ENCODE measurements at regions of chr14 and their contacts with region 1.

Region 1: DNA sequence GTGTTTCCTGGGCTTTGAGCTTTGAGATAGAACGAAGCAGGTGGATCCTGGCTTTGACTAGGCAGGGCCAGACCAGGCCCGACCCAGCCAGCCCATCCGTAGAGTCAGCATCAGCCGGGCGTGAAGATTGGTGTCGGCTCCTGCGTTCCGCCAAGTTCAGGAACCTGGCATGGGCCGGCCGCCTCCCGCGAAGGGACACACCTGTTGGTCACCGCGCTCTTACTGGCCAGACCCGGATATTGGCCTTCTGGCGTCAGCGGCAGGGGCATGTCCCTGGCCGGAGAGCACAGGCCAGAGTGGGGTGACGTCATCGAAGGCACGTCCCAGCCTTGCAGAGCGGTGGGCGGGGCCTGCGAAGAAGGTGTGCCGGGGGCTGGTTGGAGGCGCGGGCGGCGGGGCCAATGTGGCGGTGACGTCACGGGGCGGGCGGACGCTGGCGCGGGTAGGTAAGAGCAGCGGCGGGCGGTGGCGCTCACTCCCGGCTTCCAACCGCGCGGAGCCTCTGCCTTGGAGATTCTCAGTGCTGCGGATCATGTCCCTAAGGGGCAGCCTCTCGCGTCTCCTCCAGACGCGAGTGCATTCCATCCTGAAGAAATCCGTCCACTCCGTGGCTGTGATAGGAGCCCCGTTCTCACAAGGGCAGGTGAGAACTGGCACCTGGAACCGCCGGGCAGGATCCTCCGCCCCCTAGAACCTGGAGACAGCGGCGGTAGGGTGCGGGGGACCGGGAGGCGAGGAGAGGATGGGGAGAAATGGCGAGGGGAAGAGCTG is at the start of gene ARG2:
- DNase-seq: no peak
- ATAC-seq: peak; percentile 96
- H3K4me3 ChIP-seq: peak within 1 kb of the TSS; percentile 58 to 71
- H3K27ac ChIP-seq: no peak within 1 kb of the TSS
- H3K4me1 ChIP-seq: peaks cover 9% of the 10 kb centered on the region
- H3K27me3 ChIP-seq: no peaks in the 10 kb centered on the region
- CTCF ChIP-seq: no peak
- total RNA-seq, gene ARG2: 1.1 TPM

Region 2: GRCh38 chr14:67446120-67447032 is 173.3 kb before region 1 on chr14:
- CTCF ChIA-PET with region 1: no interaction called
- POLR2A ChIA-PET with region 1: no interaction called
- in situ Hi-C with region 1: no loop called
- intact Hi-C with region 1: no loop called
- DNase-seq: no peak
- ATAC-seq: no peak
- H3K4me3 ChIP-seq: no peak overlapping the region
- H3K27ac ChIP-seq: no peak overlapping the region
- H3K4me1 ChIP-seq: no peaks in the 10 kb centered on the region
- H3K27me3 ChIP-seq: no peaks in the 10 kb centered on the region; the same call in 1 of the 2 replicates
- CTCF ChIP-seq: no peak

Region 3: GRCh38 chr14:67666750-67667449 is 47.3 kb after region 1 on chr14:
- CTCF ChIA-PET with region 1: interaction called, 6 read pairs
- POLR2A ChIA-PET with region 1: no interaction called
- in situ Hi-C with region 1: no loop called
- intact Hi-C with region 1: loop called (anchors 5 kb)
- DNase-seq: peak; percentile 28
- ATAC-seq: peak; percentile 78
- H3K4me3 ChIP-seq: no peak overlapping the region
- H3K27ac ChIP-seq: no peak overlapping the region
- H3K4me1 ChIP-seq: no peaks in the 10 kb centered on the region; the same call in 1 of the 2 replicates
- H3K27me3 ChIP-seq: no peaks in the 10 kb centered on the region
- CTCF ChIP-seq: peak; percentile 59

Region 4: DNA sequence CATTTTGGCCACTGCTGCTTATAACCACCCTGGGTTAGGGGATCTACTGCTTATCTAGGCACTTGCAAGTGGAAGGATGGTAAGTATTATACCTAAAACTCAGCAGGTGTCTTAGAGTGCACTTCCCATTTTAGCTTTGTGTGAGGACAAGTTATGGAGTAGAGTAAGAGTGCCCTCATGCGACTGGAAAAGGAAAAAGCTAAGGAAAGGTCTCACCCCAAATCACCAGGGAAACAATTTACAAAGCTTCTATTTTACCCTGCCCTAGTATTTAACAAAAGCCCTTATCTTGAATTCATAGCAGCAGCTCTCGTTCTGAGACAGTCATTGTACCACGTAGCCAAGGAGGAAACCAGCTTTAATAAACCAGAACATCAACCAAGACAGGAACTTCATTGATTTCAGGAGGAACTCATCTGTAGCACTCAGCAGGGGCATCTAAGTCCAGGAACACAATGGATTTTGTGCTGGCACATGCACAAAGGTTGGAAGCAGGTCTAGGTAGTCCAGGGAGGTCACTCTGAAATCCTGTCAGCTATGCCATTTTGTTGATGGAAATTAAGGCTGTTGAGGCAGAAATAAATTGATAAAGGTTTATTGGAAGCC is 85.0 kb after region 1 on chr14:
- CTCF ChIA-PET with region 1: interaction called, 10 read pairs
- POLR2A ChIA-PET with region 1: no interaction called
- in situ Hi-C with region 1: no loop called
- intact Hi-C with region 1: loop called (anchors 10 kb)
- DNase-seq: peak; percentile 62
- ATAC-seq: peak; percentile 92
- H3K4me3 ChIP-seq: no peak overlapping the region
- H3K27ac ChIP-seq: no peak overlapping the region
- H3K4me1 ChIP-seq: peaks cover 3% of the 10 kb centered on the region; the same call in 1 of the 2 replicates
- H3K27me3 ChIP-seq: no peaks in the 10 kb centered on the region
- CTCF ChIP-seq: peak; percentile 77